ENCODE measurements at regions of chrX and their contacts with region 1.

Region 1: GRCh38 chrX:1246816-1247215 is 21.8 kb upstream of the CSF2RA start:
- DNase-seq: peak; percentile 94
- H3K4me3 Mint-ChIP-seq: no peak overlapping the region
- H3K27ac Mint-ChIP-seq: no peak overlapping the region
- H3K4me1 Mint-ChIP-seq: peaks cover 33% of the 10 kb centered on the region
- H3K27me3 Mint-ChIP-seq: no peaks in the 10 kb centered on the region

Region 2: DNA sequence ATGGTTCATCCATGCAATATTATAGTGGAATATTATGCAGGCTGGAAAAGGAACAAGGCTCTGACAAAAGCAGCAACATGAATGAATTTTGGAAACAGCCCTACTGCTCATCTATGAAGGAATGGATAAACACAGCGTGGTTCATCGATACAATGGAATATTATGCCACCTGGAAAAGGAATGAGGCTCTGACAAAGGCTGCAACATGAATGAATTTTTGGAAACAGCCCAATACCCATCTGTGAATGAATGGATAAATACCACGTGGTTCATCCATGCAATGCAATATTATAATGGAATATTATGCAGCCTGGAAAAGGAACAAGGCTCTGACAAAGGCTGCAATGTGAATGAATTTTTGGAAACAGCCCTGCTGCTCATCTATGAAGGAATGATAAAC is 194.8 kb before region 1 on chrX:
- CTCF ChIA-PET with region 1: no interaction called
- intact Hi-C with region 1: no loop called
- DNase-seq: no peak
- H3K4me3 Mint-ChIP-seq: no peak overlapping the region
- H3K27ac Mint-ChIP-seq: no peak overlapping the region
- H3K4me1 Mint-ChIP-seq: no peaks in the 10 kb centered on the region
- H3K27me3 Mint-ChIP-seq: no peaks in the 10 kb centered on the region

Region 3: GRCh38 chrX:1165535-1166196 is 81.2 kb before region 1 on chrX:
- CTCF ChIA-PET with region 1: no interaction called
- intact Hi-C with region 1: loop called (anchors 5 kb)
- DNase-seq: peak; percentile 48
- H3K4me3 Mint-ChIP-seq: peak overlapping the region; percentile 10
- H3K27ac Mint-ChIP-seq: no peak overlapping the region
- H3K4me1 Mint-ChIP-seq: peaks cover 16% of the 10 kb centered on the region
- H3K27me3 Mint-ChIP-seq: peaks cover 15% of the 10 kb centered on the region

Region 4: DNA sequence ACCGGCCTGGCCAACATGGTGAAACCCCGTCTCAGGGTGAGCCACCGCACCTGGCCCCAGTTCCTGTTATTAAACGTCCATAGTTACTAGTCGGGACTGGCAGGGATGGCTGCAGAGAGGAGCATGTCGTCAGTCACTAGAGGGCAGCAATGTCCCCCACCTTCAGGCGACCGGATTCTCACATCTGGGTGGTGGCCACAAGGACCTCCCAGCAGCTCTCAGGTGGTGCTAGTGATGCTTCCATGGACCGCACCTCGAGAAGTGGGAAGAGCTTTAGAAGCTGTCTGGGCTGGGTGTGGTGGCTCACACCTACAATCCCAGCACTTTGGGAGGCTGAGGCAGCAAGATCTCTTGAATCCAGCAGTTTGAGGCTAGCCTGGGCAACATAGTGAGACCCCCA is 76.5 kb after region 1 on chrX:
- CTCF ChIA-PET with region 1: no interaction called
- intact Hi-C with region 1: loop called (anchors 2 kb)
- DNase-seq: peak; percentile 83
- H3K4me3 Mint-ChIP-seq: no peak overlapping the region
- H3K27ac Mint-ChIP-seq: no peak overlapping the region
- H3K4me1 Mint-ChIP-seq: peaks cover 11% of the 10 kb centered on the region
- H3K27me3 Mint-ChIP-seq: peaks cover 8% of the 10 kb centered on the region

Region 5: GRCh38 chrX:1380672-1381233 is 133.9 kb after region 1 on chrX:
- CTCF ChIA-PET with region 1: no interaction called
- intact Hi-C with region 1: no loop called
- DNase-seq: no peak
- H3K4me3 Mint-ChIP-seq: no peak overlapping the region
- H3K27ac Mint-ChIP-seq: no peak overlapping the region
- H3K4me1 Mint-ChIP-seq: peaks cover 3% of the 10 kb centered on the region
- H3K27me3 Mint-ChIP-seq: no peaks in the 10 kb centered on the region

Region 6: DNA sequence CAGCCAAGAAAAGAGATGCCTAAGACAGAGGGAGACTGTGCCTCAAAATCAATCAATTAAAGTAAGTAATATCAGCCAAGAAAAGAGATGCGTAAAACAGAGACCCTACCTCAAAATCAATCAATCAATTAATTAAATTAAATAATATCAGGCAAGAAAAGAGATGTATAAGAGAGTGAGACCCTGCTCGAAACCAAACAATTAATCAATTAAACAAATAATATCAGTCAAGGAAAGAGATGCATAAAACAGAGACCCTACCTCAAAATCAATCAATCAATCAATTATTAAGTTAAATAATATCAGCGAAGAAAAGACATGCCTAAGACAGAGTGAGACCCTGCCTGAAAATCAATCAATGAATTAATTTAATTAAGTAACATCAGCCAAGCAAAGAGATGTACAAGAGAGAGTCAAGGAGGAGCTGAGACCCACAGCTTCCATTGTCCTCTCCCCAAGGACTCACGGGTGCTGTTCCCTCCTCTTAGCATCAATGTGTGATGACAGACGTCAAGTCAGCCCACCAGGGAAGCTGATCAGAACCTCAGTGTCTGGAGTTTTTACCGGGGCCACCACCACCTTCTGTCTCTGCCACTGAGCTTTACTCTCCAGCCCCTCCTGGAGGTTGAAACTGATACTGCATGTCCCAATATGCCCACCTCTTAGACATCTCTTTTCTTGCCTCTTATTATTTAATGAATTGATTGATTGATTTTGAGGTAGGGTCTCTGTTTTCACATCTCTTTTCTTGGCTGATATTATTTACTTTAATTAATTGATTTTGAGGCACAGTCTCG is 334.1 kb after region 1 on chrX:
- CTCF ChIA-PET with region 1: no interaction called
- intact Hi-C with region 1: loop called (anchors 1 kb)
- DNase-seq: peak; percentile 92
- H3K4me3 Mint-ChIP-seq: no peak overlapping the region
- H3K27ac Mint-ChIP-seq: no peak overlapping the region
- H3K4me1 Mint-ChIP-seq: peaks cover 18% of the 10 kb centered on the region
- H3K27me3 Mint-ChIP-seq: no peaks in the 10 kb centered on the region

Region 7: GRCh38 chrX:2608638-2609430 is 1362.0 kb after region 1 on chrX:
- CTCF ChIA-PET with region 1: no interaction called
- intact Hi-C with region 1: loop called (anchors 1 kb)
- DNase-seq: peak; percentile 82
- H3K4me3 Mint-ChIP-seq: peak overlapping the region; percentile 90
- H3K27ac Mint-ChIP-seq: peak overlapping the region; percentile 82
- H3K4me1 Mint-ChIP-seq: peaks cover 45% of the 10 kb centered on the region
- H3K27me3 Mint-ChIP-seq: no peaks in the 10 kb centered on the region

Measured in activated naive CD4-positive, alpha-beta T cell treated with anti-CD3 and anti-CD28 coated beads for 36 hours (primary cell).